PC-9 (cell line): ENCODE measurements at regions of chr17 and their contacts with region 1.

Region 1: DNA sequence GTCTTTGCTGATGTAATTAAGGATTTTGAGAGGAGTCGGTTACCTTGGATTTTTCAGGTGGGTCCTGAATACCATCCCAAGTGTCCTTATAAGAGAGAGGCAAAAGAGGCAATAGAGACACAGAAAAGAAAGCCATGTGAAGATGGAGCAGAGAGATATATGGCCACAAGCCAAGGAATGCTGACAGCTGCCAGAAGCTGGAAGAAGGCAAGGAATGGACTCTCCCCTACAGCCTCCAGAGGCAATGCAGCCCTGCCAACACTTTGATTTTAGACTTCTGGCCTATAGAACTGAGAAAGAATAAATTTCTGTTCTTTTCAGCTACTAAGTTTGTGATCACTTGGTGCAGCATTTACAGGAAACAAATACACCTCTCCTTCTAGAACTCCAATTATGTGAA is 8.2 kb upstream of the RNFT1 start:
- DNase-seq: no peak
- H3K4me3 ChIP-seq: no peak overlapping the region
- H3K27ac ChIP-seq: no peak overlapping the region
- H3K4me1 ChIP-seq: no peaks in the 10 kb centered on the region
- H3K27me3 ChIP-seq: no peaks in the 10 kb centered on the region
- CTCF ChIP-seq: no peak

Region 2: GRCh38 chr17:59534598-59534997 is 438.2 kb before region 1 on chr17:
- CTCF ChIA-PET with region 1: no interaction called
- POLR2A ChIA-PET with region 1: interaction called, 19 read pairs
- intact Hi-C with region 1: no loop called
- DNase-seq: no peak
- H3K4me3 ChIP-seq: no peak overlapping the region
- H3K27ac ChIP-seq: no peak overlapping the region
- H3K4me1 ChIP-seq: no peaks in the 10 kb centered on the region
- H3K27me3 ChIP-seq: no peaks in the 10 kb centered on the region
- CTCF ChIP-seq: peak; percentile 59